Activated CD4-positive, alpha-beta memory T cell treated with anti-CD3 and anti-CD28 coated beads for 36 hours (primary cell): ENCODE measurements at regions of chr21 and their contacts with region 1.

Region 1: DNA sequence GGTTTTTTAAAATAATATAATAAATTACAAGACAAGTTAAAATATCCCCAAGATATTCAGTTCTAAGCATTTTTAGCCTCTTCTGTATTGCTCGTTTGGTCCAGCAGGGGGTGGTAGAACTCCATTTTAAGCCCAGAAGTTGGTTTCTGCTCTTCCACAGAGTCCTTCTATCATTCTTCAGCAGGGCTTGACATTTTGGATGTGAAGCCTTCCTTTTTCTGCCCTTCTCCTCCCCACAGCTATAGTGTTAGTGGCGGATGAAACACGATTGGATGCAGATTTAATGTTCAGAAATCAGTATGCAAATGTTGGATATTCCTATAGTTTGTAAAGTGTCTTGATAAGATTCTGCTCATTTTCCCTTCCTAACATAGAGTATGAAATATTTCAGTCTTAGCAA is 1.4 kb downstream of the NCAM2 start:
- DNase-seq: peak; percentile 47
- H3K4me3 Mint-ChIP-seq: no peak overlapping the region
- H3K27ac Mint-ChIP-seq: no peak overlapping the region
- H3K4me1 Mint-ChIP-seq: peaks cover 16% of the 10 kb centered on the region
- H3K27me3 Mint-ChIP-seq: peaks cover 25% of the 10 kb centered on the region

Region 2: GRCh38 chr21:20760221-20760620 is 239.4 kb before region 1 on chr21:
- CTCF ChIA-PET with region 1: no interaction called
- POLR2A ChIA-PET with region 1: no interaction called
- intact Hi-C with region 1: no loop called
- DNase-seq: no peak
- H3K4me3 Mint-ChIP-seq: no peak overlapping the region
- H3K27ac Mint-ChIP-seq: no peak overlapping the region
- H3K4me1 Mint-ChIP-seq: no peaks in the 10 kb centered on the region
- H3K27me3 Mint-ChIP-seq: no peaks in the 10 kb centered on the region

Region 3: DNA sequence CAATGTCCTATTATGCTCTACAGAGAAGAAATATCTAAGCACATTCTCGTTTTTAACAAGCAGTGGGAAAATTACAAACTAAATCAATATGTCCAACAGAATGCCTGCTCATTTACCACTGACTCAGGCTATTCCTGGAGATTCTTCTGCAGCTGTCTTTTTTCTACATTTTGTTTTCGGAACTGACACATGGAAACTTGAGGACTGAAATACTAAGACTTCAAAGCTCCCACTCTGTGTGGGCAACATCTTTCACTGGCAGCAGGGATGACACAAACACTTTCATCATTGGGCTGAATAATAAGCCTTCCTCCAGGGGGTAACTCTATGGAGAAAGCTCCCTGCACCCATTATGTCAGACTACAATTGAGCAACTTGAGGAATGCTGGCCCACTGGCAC is 177.0 kb before region 1 on chr21:
- CTCF ChIA-PET with region 1: no interaction called
- POLR2A ChIA-PET with region 1: no interaction called
- intact Hi-C with region 1: no loop called
- DNase-seq: no peak
- H3K4me3 Mint-ChIP-seq: no peak overlapping the region
- H3K27ac Mint-ChIP-seq: no peak overlapping the region
- H3K4me1 Mint-ChIP-seq: no peaks in the 10 kb centered on the region
- H3K27me3 Mint-ChIP-seq: no peaks in the 10 kb centered on the region

Region 4: GRCh38 chr21:20943561-20943997 is 56.1 kb before region 1 on chr21:
- CTCF ChIA-PET with region 1: no interaction called
- POLR2A ChIA-PET with region 1: no interaction called
- intact Hi-C with region 1: no loop called
- DNase-seq: no peak
- H3K4me3 Mint-ChIP-seq: no peak overlapping the region
- H3K27ac Mint-ChIP-seq: no peak overlapping the region
- H3K4me1 Mint-ChIP-seq: no peaks in the 10 kb centered on the region
- H3K27me3 Mint-ChIP-seq: no peaks in the 10 kb centered on the region

Region 5: DNA sequence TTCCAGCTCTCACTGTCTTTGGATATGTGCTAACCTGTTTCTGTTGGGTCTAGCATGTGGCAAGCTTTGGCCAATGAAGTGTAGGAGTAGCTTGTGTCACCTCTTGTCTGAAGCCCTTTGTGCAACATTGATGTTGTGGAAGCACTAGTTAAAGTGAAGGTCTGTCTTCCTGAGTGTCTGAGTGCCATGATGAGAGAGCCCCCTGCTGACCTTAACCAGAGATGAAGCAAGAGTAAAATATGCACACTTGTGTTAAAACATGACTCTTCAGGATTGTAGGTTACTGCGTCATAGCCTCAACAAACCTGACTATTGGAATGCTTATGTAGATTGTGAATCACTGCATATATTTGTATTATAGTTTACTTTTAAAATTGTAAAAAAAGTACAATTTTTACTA is 102.3 kb after region 1 on chr21:
- CTCF ChIA-PET with region 1: interaction called, 3 read pairs
- POLR2A ChIA-PET with region 1: no interaction called
- intact Hi-C with region 1: loop called (anchors 2 kb)
- DNase-seq: no peak
- H3K4me3 Mint-ChIP-seq: no peak overlapping the region
- H3K27ac Mint-ChIP-seq: no peak overlapping the region
- H3K4me1 Mint-ChIP-seq: no peaks in the 10 kb centered on the region
- H3K27me3 Mint-ChIP-seq: no peaks in the 10 kb centered on the region

Region 6: DNA sequence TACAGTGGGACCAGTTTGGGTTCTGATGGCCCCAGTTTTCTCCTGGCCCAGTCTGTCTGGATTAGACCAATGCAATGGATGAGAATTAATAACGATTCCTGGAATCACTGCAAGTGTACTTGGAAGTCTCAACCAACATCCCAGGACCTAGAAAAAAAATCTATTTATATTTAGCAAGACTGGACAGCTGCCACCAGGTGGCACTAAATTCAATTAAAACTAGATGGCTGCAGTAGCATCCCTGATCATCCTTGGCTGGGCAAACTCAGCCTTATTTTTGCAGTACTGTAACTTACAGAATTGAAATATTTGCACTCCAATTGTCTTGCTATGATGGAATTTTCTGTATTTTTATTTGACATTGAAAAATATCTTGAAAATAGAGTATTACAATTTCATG is 164.2 kb after region 1 on chr21:
- CTCF ChIA-PET with region 1: no interaction called
- POLR2A ChIA-PET with region 1: no interaction called
- intact Hi-C with region 1: loop called (anchors 5 kb)
- DNase-seq: peak; percentile 34
- H3K4me3 Mint-ChIP-seq: no peak overlapping the region
- H3K27ac Mint-ChIP-seq: no peak overlapping the region
- H3K4me1 Mint-ChIP-seq: no peaks in the 10 kb centered on the region
- H3K27me3 Mint-ChIP-seq: no peaks in the 10 kb centered on the region

Region 7: GRCh38 chr21:21921421-21922232 is 922.0 kb after region 1 on chr21:
- CTCF ChIA-PET with region 1: interaction called, 4 read pairs
- POLR2A ChIA-PET with region 1: no interaction called
- intact Hi-C with region 1: loop called (anchors 2 kb)
- DNase-seq: no peak
- H3K4me3 Mint-ChIP-seq: no peak overlapping the region
- H3K27ac Mint-ChIP-seq: no peak overlapping the region
- H3K4me1 Mint-ChIP-seq: no peaks in the 10 kb centered on the region
- H3K27me3 Mint-ChIP-seq: no peaks in the 10 kb centered on the region

Region 8: DNA sequence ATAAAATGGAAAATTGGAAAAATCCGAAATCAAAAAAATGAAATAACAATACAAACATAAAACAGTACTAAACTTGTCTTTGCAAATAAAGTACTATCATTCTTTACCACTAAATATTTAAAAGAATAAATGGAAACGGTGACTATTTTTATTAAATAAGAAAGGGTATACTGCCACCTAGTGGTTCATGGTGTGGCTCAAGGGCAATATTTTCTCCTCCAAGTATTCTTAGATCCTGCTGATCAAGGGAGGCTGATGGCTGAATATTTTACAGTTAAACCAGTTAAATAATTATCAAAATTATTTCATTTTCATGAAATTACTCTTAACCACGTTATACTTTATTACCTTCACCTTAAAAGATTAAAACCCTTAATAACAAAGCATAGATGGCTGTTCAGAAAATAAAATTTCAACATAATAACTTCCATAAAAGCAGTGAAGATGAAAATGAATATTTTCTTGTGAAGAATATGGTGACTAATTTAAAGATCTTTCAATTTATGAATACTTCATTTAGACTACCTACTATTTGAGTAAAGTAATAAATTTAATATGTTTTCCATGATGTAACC is 1792.4 kb after region 1 on chr21:
- CTCF ChIA-PET with region 1: interaction called, 4 read pairs
- POLR2A ChIA-PET with region 1: no interaction called
- intact Hi-C with region 1: loop called (anchors 1 kb)
- DNase-seq: no peak
- H3K4me3 Mint-ChIP-seq: no peak overlapping the region
- H3K27ac Mint-ChIP-seq: no peak overlapping the region
- H3K4me1 Mint-ChIP-seq: no peaks in the 10 kb centered on the region
- H3K27me3 Mint-ChIP-seq: no peaks in the 10 kb centered on the region